SK-N-SH (cell line): ENCODE measurements at regions of chr10 and their contacts with region 1.

Region 1: DNA sequence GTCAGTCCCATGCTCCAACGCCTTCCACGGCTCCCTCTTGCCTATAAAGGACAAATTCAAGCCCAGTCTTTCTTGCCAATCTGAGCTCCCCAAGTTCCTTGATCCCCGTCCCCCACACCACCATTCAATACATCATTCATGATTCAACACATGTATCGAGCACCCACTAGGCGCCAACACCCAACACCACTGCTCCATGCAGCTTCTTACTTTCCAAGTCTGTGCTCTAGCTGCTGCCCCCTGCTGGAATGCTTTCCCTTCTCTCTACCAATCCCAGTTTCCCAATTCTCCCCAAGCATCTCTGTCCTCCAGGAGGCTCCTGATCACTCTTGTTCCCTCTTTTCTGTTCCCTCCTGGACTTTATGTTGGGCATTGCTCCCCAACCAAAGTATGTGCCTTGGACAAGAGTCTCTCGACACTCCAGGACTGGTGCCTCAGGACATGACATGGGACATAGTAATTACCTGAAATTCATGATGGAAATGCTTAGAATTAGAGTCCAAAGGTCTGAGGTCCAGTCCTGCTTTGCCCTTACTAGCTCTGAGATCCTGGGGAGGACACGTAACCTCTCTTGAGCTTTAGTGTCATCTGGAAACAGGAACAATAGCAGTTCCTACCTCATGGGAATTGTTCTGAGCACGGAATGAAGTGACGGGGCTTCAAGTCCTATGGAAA is 172.7 kb downstream of the NEURL1 start:
- DNase-seq: peak; percentile 68
- H3K4me3 ChIP-seq: no peak overlapping the region
- H3K27ac ChIP-seq: no peak overlapping the region
- H3K4me1 ChIP-seq: peaks cover 0 to 7% of the 10 kb centered on the region in 2 experiments; a peak in 1 of 4 replicates
- H3K27me3 ChIP-seq: no peaks in the 10 kb centered on the region
- CTCF ChIP-seq: peak; percentile 56
- EP300 ChIP-seq: no peak
- RAD21 ChIP-seq: peak; percentile 46

Region 2: DNA sequence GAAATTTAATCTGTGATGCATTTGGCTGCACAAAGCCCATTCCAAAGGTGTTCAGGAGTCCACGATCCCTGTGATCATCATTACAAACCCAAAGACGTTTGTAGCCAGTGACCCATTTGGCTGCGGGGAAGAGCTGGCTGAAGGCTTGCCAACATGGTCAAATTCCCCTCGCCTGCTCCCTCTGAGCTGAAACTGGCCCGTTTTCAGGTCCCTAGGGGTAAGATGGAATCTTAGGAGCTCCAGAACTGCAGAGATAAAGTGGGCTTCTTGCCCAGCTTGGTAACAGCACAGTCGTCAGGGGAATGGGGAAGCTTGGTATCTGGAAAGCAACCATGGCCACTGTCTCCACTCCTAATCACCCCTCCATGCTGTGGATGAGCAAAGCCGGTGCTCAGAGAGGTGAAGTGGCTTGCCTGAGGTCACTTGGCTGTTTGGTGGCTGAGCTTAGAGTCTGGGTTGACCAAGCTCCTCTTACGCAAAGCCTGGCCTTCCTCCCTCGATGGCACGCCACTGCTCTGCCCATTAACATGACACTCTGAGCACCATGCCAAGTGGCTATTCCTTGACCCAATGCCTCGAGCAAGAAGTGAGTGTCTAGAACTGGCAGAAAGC is 17.2 kb before region 1 on chr10:
- CTCF ChIA-PET with region 1: interaction called, 10 read pairs
- POLR2A ChIA-PET with region 1: no interaction called
- DNase-seq: no peak
- H3K4me3 ChIP-seq: no peak overlapping the region
- H3K27ac ChIP-seq: peak overlapping the region in 1 of 2 experiments; percentile 64; a peak in 2 of 4 replicates
- H3K4me1 ChIP-seq: peaks cover 6 to 29% of the 10 kb centered on the region in 2 experiments; a peak in 2 of 4 replicates
- H3K27me3 ChIP-seq: no peaks in the 10 kb centered on the region
- CTCF ChIP-seq: no peak
- EP300 ChIP-seq: peak in 1 of 2 experiments; percentile 42; a peak in 1 of 4 replicates
- RAD21 ChIP-seq: no peak

Region 3: DNA sequence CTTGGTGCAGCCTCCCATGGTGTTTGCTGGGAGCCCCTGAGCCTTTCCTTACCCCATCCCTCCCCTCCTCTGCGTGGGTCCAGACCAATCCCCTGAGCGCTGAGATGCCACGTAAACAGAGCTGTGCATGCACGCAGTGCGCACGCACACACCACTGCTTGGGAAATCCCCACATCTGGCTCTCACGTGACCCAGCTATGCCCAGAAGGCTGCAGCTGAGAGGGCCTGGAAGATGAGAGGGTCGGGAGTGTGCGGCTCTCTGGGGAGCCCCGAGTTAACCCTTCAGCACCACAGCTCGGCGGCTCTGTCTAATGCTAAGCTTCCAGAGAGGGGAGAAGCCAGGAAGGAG is 11.9 kb after region 1 on chr10:
- CTCF ChIA-PET with region 1: interaction called, 16 read pairs
- POLR2A ChIA-PET with region 1: no interaction called
- DNase-seq: peak; percentile 94
- H3K4me3 ChIP-seq: no peak overlapping the region
- H3K27ac ChIP-seq: peak overlapping the region; percentile 70 to 77
- H3K4me1 ChIP-seq: peaks cover 0 to 22% of the 10 kb centered on the region in 2 experiments; a peak in 1 of 4 replicates
- H3K27me3 ChIP-seq: no peaks in the 10 kb centered on the region
- CTCF ChIP-seq: no peak
- EP300 ChIP-seq: peak in 1 of 2 experiments; percentile 55; a peak in 1 of 4 replicates
- RAD21 ChIP-seq: no peak